ENCODE measurements at regions of chr6 and their contacts with region 1.

Region 1: DNA sequence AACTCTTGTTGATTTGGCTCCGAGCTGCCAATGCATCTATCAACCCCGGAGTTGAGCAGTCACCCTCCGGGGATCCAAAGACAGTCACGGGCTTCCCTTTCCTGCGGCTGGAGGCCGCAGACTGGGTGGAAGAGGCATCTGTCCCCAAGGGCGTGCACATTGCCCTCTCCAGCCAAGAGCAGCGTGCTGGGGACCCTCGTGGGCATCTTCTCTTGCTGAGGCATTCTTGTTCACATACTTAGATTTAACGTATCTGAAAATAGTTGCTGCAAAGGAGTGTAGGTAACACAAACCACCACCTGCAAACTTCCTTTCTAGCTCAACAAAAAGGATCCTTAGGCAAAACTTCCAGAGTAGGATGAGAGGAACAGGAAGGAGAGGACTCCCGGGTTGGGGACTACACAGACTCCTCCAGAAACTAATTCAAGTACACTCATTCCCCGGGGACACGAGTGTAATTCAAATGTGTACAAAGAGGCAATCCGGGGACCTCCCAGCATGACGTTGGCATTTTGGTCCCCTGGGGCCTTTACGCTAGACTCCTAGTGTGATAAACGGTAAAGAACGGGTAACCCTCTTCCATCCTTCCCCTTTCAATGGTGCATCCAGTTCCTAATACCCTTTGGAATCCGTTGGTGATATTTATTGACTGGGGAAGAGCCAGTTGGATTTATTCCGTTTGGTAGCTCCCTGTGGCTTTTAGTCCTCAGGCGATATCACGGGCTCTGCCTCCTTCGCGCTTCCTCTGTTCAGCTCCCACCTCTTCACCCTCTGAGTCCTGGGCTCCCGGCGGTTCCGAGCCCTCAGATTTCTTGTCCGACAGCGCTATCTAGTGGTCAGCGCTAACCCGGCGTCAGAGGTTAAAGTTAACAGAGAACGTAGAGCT is 2.7 kb upstream of the COL12A1 start:
- DNase-seq: peak; percentile 63
- ATAC-seq: peak; percentile 76
- H3K4me3 Mint-ChIP-seq: peak overlapping the region; percentile 78
- H3K27ac Mint-ChIP-seq: peak overlapping the region; percentile 30
- H3K4me1 Mint-ChIP-seq: peaks cover 52% of the 10 kb centered on the region
- H3K27me3 Mint-ChIP-seq: peaks cover 71% of the 10 kb centered on the region
- CTCF ChIP-seq: peak; percentile 56

Region 2: GRCh38 chr6:73451223-73452107 is 1757.1 kb before region 1 on chr6:
- CTCF ChIA-PET with region 1: no interaction called
- POLR2A ChIA-PET with region 1: no interaction called
- intact Hi-C with region 1: loop called (anchors 5 kb)
- DNase-seq: peak; percentile 54
- ATAC-seq: peak; percentile 59
- H3K4me3 Mint-ChIP-seq: peak overlapping the region; percentile 93
- H3K27ac Mint-ChIP-seq: peak overlapping the region; percentile 91
- H3K4me1 Mint-ChIP-seq: peaks cover 22% of the 10 kb centered on the region
- H3K27me3 Mint-ChIP-seq: no peaks in the 10 kb centered on the region
- CTCF ChIP-seq: no peak

Region 3: DNA sequence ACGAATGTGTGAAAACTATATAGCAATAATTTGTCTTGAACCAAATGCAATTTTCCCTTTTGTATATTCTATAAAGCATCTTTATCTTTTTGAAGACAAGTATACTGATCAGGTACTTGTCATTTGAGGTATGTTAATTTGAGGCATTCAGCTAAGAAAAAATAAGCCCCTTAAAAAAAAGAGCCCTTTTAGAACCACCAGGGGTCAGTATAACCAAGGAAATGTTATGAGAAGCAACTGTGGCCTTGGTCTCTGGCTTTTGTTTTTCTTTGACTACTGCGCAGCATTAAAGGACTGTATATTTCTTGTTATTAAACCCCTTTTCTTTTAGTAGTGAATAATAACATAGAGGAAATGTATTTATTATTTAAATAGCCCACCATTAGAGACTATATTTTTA is 1469.4 kb before region 1 on chr6:
- CTCF ChIA-PET with region 1: interaction called, 272 read pairs
- POLR2A ChIA-PET with region 1: interaction called, 4 read pairs
- intact Hi-C with region 1: loop called (anchors 1 kb)
- DNase-seq: no peak
- ATAC-seq: peak; percentile 71
- H3K4me3 Mint-ChIP-seq: no peak overlapping the region
- H3K27ac Mint-ChIP-seq: no peak overlapping the region
- H3K4me1 Mint-ChIP-seq: no peaks in the 10 kb centered on the region
- H3K27me3 Mint-ChIP-seq: peaks cover 3% of the 10 kb centered on the region
- CTCF ChIP-seq: no peak

Region 4: DNA sequence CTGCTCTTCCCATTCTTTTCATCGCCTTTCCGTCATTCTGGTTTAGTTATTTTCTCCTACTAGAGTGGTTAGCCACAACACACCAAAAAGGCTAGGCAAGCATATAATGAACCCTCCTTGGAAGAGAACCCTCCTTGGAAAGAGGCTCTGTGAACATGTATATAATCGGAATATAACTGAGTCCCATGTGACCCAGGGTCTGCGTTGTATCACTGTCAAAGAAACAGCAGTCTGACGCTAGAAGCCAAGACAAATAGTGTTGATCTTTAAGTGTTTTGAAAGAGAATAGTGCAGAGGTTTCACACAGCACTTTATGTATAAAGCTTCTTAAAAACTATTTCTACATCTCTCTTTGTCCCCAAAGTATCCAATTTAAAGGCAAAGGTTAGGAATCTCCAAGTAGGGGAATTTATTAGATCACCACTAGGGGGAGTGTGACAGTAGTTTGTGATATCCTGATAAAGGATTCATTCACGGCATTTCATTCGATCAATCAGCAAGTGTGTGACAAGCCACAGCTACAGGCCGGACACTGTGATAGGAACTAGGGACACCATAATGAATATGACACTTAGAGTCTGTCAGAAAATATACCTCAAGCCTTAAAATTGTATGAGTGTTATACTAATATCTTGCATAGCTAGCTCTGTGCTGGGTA is 1117.3 kb before region 1 on chr6:
- CTCF ChIA-PET with region 1: interaction called, 36 read pairs
- POLR2A ChIA-PET with region 1: no interaction called
- intact Hi-C with region 1: no loop called
- DNase-seq: no peak
- ATAC-seq: no peak
- H3K4me3 Mint-ChIP-seq: no peak overlapping the region
- H3K27ac Mint-ChIP-seq: no peak overlapping the region
- H3K4me1 Mint-ChIP-seq: no peaks in the 10 kb centered on the region
- H3K27me3 Mint-ChIP-seq: no peaks in the 10 kb centered on the region
- CTCF ChIP-seq: no peak

Region 5: GRCh38 chr6:75230484-75231325 is 22.2 kb after region 1 on chr6:
- CTCF ChIA-PET with region 1: interaction called, 13 read pairs
- POLR2A ChIA-PET with region 1: no interaction called
- intact Hi-C with region 1: no loop called
- DNase-seq: no peak
- ATAC-seq: no peak
- H3K4me3 Mint-ChIP-seq: no peak overlapping the region
- H3K27ac Mint-ChIP-seq: no peak overlapping the region
- H3K4me1 Mint-ChIP-seq: no peaks in the 10 kb centered on the region
- H3K27me3 Mint-ChIP-seq: peaks cover 11% of the 10 kb centered on the region
- CTCF ChIP-seq: no peak

Region 6: DNA sequence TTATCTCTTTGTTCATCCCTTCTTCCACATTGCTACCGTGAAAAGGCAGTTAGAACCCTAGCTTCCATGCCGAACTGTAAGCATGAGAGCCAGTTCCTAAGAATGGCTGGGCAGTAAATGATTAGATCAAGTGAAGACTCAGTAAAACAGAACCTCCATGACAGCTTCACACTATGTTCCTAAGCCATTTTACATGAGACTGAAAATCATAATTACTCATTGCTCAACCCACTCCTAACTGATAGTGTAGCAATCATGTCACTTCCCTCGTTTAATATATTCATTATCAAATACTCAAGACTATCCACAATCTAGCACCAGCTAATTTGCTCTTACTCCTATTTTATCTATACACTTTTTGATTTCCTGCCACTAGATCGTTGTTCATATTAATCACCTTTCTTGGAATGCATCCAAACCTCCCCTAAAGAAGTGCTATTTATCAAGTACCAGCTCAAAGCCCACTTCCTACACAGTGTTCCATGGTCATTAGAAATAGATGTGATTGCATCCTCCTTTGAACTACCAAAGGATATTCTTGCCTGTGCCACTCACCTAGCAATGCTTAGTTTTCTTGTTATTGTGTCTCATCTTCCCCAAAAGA is 70.0 kb after region 1 on chr6:
- CTCF ChIA-PET with region 1: no interaction called
- POLR2A ChIA-PET with region 1: no interaction called
- intact Hi-C with region 1: no loop called
- DNase-seq: no peak
- ATAC-seq: no peak
- H3K4me3 Mint-ChIP-seq: no peak overlapping the region
- H3K27ac Mint-ChIP-seq: no peak overlapping the region
- H3K4me1 Mint-ChIP-seq: peaks cover 61% of the 10 kb centered on the region
- H3K27me3 Mint-ChIP-seq: no peaks in the 10 kb centered on the region
- CTCF ChIP-seq: no peak

Region 7: DNA sequence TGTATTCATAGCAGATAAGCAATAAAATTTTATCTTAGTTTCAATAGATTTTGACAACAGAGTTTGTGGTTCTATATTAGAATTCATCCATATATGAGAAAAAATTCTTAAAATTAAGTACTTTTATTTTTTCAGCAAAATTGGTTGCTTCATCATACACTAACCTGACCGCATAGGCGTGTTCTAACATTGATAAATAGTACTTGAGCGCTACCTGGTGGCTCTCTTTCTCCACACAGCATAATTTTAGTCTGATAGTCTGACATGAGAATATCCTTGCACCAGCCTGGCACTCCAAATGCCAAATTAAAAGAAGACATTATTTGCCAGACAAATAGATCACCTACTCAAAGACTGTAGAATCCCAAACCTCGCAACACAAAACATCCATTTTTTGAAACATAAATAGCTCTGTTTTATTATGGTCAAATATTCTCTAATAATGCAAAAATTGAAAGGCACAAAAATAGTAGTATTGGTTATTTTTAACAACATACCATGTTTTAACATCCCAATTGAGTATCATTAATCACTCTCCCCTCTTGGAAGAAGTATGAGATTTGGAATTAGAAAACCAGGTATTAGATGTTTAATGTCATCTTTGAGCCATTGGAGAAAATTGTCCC is 318.1 kb after region 1 on chr6:
- CTCF ChIA-PET with region 1: interaction called, 5 read pairs
- POLR2A ChIA-PET with region 1: no interaction called
- intact Hi-C with region 1: loop called (anchors 1 kb)
- DNase-seq: no peak
- ATAC-seq: peak; percentile 47
- H3K4me3 Mint-ChIP-seq: no peak overlapping the region
- H3K27ac Mint-ChIP-seq: no peak overlapping the region
- H3K4me1 Mint-ChIP-seq: no peaks in the 10 kb centered on the region
- H3K27me3 Mint-ChIP-seq: peaks cover 20% of the 10 kb centered on the region
- CTCF ChIP-seq: no peak